Activated CD4-positive, alpha-beta memory T cell treated with anti-CD3 and anti-CD28 coated beads for 36 hours (primary cell): ENCODE measurements at regions of chr2 and their contacts with region 1.

Region 1: DNA sequence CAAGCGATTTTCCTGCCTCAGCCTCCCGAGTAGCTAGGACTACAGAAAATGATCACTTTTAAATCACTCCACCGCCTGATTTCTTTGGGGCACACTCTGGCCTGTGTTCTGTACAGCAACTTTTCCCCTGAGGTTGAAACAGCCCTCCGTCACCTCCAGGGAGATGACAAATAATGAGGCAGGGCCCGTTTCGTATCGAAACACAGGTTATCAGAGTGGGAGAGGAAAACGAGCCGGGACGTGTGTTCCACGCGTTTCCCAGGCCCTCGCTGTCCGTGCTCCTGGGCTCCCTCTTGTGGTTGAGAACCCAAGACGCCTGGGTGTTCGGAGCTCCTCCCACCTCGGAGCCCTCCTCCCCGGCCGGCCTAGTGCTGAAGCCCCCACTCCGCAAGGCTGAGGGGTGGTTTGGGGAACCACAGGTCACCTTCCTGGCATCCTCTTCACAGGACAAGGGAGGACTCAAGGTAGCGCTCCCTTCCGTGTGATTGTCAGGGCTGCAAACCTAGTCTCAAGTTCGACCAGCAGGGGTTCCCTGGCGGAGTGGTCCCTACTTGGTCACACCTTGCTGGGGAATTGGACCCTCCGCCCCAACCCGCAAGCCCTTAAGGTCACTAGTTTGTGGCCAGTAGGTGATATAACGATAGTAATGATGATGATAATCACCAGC is 12.8 kb downstream of the ATP6V1B1 start:
- DNase-seq: peak; percentile 81
- H3K4me3 Mint-ChIP-seq: peak overlapping the region; percentile 65
- H3K27ac Mint-ChIP-seq: no peak overlapping the region
- H3K4me1 Mint-ChIP-seq: peaks cover 10% of the 10 kb centered on the region
- H3K27me3 Mint-ChIP-seq: peaks cover 9% of the 10 kb centered on the region

Region 2: DNA sequence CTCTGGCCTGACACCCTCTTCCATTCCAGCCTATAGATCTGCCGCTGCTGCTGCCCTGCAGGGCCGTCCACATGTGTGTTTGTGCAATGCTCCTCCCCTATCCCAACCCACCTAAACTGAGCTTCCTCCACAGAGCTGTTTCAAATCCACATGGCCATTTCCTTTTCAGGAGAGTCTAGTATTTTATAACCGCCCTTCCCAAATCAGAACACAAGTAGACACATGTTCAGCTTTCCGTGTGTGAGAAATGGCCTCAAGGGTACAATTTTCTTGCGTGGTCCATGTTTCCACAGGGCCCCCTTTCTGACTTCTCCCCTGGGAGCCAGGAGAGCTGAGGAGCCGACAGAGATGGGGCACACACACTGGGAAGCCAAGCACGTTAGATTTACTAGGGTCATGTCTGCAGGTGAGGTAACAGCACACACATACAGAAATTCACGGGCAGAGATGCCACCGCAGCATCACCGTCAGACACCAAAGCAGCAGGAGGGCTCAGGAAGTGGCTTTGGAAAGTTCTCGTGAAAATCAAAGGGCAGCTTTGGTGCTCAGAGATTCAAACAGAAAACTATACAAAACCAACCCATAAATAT is 292.0 kb before region 1 on chr2:
- CTCF ChIA-PET with region 1: interaction called, 5 read pairs
- POLR2A ChIA-PET with region 1: no interaction called
- intact Hi-C with region 1: loop called (anchors 10 kb)
- DNase-seq: peak; percentile 50
- H3K4me3 Mint-ChIP-seq: no peak overlapping the region
- H3K27ac Mint-ChIP-seq: no peak overlapping the region
- H3K4me1 Mint-ChIP-seq: peaks cover 18% of the 10 kb centered on the region
- H3K27me3 Mint-ChIP-seq: peaks cover 20% of the 10 kb centered on the region

Region 3: DNA sequence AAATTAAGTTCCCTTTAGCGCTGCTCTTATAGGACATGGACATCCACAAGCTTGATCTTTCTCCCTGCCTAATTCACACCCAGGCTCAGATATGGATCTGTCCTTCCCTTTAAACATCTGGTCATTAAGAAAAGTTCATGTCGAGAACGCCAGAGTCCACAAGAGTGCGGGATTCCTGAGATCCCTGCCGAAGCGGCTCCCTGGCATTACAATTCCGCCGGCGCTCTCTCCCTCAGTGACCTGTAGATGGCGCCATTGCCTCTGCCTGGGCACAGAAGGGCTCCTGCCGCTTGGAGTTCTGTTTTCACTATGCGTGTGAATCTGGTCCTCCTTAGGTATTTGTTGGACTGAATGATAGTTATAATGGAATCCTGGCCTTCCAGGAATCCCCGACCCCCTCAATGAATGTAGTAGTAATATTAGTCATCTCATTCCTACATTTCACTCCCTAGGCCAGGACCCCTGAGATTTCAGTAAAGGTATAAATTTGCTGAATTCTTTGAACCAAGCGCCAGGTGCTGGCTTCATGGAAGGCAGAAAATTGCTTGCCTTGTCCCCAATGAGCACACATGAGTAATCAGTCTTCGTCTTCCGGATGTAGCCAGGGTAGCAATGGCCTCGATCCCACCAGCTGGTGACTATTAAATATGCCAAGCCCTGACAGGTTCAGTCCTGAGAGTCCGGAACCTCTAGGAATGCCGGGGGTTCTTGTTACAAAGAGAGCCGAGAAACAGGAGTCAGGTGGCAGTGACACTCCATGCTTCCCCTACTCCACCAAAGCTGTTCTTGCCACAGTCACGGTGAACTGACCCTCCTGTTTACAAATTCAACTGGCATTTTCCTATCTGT is 86.5 kb before region 1 on chr2:
- CTCF ChIA-PET with region 1: interaction called, 19 read pairs
- POLR2A ChIA-PET with region 1: no interaction called
- intact Hi-C with region 1: loop called (anchors 2 kb)
- DNase-seq: peak; percentile 80
- H3K4me3 Mint-ChIP-seq: no peak overlapping the region
- H3K27ac Mint-ChIP-seq: no peak overlapping the region
- H3K4me1 Mint-ChIP-seq: no peaks in the 10 kb centered on the region
- H3K27me3 Mint-ChIP-seq: peaks cover 26% of the 10 kb centered on the region

Region 4: GRCh38 chr2:70919672-70920366 is 28.7 kb before region 1 on chr2:
- CTCF ChIA-PET with region 1: interaction called, 12 read pairs
- POLR2A ChIA-PET with region 1: no interaction called
- intact Hi-C with region 1: no loop called
- DNase-seq: peak; percentile 83
- H3K4me3 Mint-ChIP-seq: no peak overlapping the region
- H3K27ac Mint-ChIP-seq: no peak overlapping the region
- H3K4me1 Mint-ChIP-seq: no peaks in the 10 kb centered on the region
- H3K27me3 Mint-ChIP-seq: peaks cover 14% of the 10 kb centered on the region

Region 5: DNA sequence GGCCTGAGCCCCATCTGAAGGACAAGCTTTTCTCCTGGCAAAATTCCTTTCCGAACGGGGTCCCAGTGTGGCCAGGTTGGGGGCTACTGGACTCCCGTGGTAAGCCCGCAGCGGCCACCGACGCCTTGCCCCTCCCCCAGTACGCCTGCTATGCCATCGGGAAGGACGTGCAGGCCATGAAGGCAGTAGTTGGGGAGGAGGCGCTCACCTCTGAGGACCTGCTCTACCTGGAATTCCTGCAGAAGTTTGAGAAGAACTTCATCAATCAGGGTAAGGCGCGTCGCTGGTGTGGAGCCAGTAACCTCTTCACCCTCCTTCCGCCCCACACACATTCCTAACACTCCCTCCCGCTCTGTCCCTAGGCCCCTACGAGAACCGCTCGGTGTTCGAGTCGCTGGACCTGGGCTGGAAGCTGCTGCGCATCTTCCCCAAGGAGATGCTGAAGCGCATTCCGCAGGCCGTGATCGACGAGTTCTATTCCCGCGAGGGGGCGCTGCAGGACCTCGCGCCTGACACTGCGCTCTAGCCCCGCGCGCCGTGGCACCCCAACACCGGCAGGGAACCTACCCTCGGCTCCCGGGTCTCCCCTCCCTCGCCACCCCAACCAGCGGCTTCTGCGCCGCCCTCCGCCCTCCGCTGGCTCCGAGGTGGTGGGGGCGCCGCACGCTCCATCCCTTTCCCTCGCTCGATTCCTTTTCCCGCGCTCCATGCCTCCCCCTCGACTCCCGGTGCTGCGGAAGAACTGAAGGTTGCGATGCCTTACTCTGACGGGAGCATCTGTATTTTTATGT is 16.3 kb after region 1 on chr2:
- CTCF ChIA-PET with region 1: interaction called, 50 read pairs
- POLR2A ChIA-PET with region 1: no interaction called
- intact Hi-C with region 1: no loop called
- DNase-seq: peak; percentile 87
- H3K4me3 Mint-ChIP-seq: peak overlapping the region; percentile 76
- H3K27ac Mint-ChIP-seq: no peak overlapping the region
- H3K4me1 Mint-ChIP-seq: peaks cover 3% of the 10 kb centered on the region
- H3K27me3 Mint-ChIP-seq: peaks cover 16% of the 10 kb centered on the region

Region 6: DNA sequence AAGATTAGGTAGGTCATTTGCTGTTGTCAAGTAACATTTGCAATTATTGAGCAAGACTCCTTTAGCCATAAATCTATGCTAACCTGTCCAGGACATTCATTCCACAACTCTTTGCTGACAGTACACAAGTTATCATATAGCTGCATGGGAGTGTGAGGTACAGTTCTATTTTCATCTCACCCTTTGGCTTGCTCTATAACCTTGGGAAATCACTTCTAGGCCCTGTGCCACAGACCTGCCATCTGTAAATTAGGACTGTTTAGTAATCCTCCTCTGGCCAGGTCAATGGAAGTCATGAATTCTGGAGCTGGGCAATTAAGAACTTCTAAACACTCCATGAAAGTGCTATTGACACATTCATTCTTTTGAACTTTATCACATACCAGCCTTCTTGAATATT is 313.1 kb after region 1 on chr2:
- CTCF ChIA-PET with region 1: no interaction called
- POLR2A ChIA-PET with region 1: no interaction called
- intact Hi-C with region 1: no loop called
- DNase-seq: no peak
- H3K4me3 Mint-ChIP-seq: no peak overlapping the region
- H3K27ac Mint-ChIP-seq: no peak overlapping the region
- H3K4me1 Mint-ChIP-seq: no peaks in the 10 kb centered on the region
- H3K27me3 Mint-ChIP-seq: peaks cover 15% of the 10 kb centered on the region